Heart right ventricle (tissue), 16 donors: ENCODE measurements at regions of chr19 and their contacts with region 1.

Region 1: DNA sequence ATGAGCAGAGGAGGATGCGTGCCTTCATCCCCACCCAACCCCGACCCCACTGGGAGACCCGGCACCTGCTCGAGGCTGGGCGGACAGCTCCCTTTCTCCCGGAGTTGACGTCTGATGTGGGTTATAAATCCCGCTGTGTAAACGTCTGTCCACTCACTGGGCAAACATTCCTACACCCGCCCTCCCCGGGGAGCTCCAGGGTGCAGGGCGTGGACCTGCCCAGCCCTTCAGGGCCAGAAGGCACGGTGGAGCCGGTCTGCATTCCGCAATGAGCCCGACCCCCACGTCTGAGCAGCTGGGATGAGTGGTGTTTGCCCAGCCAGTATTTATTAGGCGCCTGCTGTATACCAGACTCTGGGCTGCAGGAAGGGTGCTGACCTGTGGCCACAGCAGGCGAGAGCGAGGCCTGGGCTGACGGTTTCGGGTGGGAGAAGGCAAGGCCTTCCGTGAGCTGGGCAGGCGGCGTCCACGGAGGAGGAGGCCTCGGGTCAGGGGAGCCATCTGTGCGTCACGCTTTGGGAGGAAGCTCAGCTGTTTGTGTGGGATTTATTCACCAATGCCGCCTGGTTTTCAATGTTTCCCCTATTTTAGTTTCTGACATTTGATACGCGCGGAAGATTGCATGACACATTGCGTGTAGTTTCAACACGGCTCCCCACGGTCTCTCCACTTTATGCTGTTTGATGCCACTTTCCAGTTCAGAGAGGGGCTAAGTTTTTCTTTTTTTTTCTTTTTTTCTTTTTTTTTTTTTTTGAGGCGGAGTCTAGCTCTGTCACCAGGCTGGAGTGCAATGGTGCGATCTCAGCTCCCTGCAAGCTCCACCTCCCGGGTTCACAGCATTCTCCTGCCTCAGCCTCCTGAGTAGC is 2.0 kb downstream of the MISP start:
- DNase-seq: no peak
- ATAC-seq: peak in 7 of 8 donors; percentile 20 to 54 (median 49)
- H3K4me3 ChIP-seq: no peak overlapping the region
- H3K27ac ChIP-seq: peak overlapping the region in 3 of 10 donors; percentile 34 to 65 (median 35)
- H3K4me1 ChIP-seq: peaks cover 0 to 15% (median 0%) of the 10 kb centered on the region in 9 donors
- H3K27me3 ChIP-seq: peaks cover 0 to 17% (median 9%) of the 10 kb centered on the region in 7 donors
- CTCF ChIP-seq: no peak

Region 2: GRCh38 chr19:835210-835810 is 82.4 kb after region 1 on chr19:
- intact Hi-C with region 1: loop called in 1 of 10 experiments (anchors 10 kb)
- DNase-seq: no peak
- ATAC-seq: peak in 2 of 8 donors; percentile 48 to 51
- H3K4me3 ChIP-seq: no peak overlapping the region
- H3K27ac ChIP-seq: no peak overlapping the region
- H3K4me1 ChIP-seq: peaks cover 0 to 12% (median 0%) of the 10 kb centered on the region in 9 donors
- H3K27me3 ChIP-seq: peaks cover 0 to 50% (median 39%) of the 10 kb centered on the region in 7 donors
- CTCF ChIP-seq: no peak